ENCODE measurements at regions of chr1 and their contacts with region 1.

Region 1: GRCh38 chr1:68111519-68112436 is 61.4 kb upstream of the DIRAS3 start:
- DNase-seq: peak; percentile 58
- H3K4me3 ChIP-seq: no peak overlapping the region
- H3K27ac ChIP-seq: no peak overlapping the region
- H3K4me1 ChIP-seq: peaks cover 5% of the 10 kb centered on the region
- H3K27me3 ChIP-seq: no peaks in the 10 kb centered on the region
- CTCF ChIP-seq: peak; percentile 44

Region 2: DNA sequence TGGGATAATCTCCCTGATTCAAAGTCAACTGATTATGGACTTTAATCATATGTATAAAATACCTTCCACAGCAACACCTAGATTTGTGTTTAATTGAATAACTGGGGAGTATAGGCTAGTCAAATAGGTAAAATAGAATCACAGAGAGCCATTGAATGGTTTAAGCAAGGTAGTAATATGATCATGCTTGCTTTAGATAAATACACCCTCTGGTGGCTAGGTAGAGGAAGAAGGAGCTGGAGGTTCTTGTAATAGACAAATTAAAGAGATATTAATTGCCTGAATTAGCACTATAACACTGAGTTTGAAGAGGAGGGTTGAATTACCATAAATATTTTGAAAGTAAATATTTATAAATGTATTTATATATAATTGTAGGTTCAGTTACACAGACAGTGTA is 101.7 kb before region 1 on chr1:
- intact Hi-C with region 1: no loop called
- DNase-seq: no peak
- H3K4me3 ChIP-seq: no peak overlapping the region
- H3K27ac ChIP-seq: no peak overlapping the region
- H3K4me1 ChIP-seq: no peaks in the 10 kb centered on the region
- H3K27me3 ChIP-seq: no peaks in the 10 kb centered on the region
- CTCF ChIP-seq: no peak

Region 3: GRCh38 chr1:68057564-68057963 is 54.2 kb before region 1 on chr1:
- intact Hi-C with region 1: loop called (anchors 5 kb)
- DNase-seq: no peak
- H3K4me3 ChIP-seq: no peak overlapping the region
- H3K27ac ChIP-seq: no peak overlapping the region
- H3K4me1 ChIP-seq: no peaks in the 10 kb centered on the region
- H3K27me3 ChIP-seq: no peaks in the 10 kb centered on the region
- CTCF ChIP-seq: no peak

Region 4: DNA sequence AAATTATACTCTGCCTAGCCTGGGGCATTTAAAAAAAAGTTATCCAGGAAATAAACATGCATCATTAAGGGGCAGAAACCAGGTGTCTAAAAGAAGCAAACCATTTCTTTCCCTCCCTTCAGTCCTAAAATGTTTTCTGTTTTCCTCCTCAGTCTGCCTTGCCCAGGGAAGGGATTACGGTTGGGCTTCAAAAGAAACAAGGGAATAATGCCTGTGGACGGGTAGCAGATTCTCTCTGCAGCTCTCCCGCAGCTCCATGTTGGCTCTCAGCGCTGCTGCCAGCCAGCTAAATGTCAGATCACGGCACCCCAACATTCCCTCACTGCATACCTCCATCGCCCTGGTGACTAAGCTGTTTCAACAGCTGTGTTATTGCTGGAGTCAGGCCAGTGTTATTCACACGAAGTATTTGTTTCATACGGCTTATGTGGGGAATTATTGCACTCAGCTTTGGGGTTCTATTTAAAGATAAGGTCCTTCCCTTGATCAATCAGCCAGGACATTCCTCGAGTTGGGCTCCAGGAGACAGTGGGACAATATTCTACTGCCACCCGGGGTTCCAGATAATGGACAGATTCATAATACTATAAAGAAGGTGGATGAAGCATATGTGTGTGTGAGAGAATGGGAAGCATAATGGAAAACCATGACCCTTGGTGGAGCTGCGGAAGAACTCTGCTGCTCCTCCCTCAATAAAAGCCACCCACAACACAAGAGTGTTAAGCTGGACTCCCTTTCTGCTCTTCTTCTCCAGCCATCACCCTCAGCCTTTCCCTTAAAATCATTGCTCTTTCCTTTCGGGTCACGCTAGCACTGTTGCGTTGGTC is 62.3 kb after region 1 on chr1:
- intact Hi-C with region 1: no loop called
- DNase-seq: peak; percentile 69
- H3K4me3 ChIP-seq: no peak overlapping the region
- H3K27ac ChIP-seq: peak overlapping the region; percentile 64
- H3K4me1 ChIP-seq: peaks cover 15% of the 10 kb centered on the region
- H3K27me3 ChIP-seq: no peaks in the 10 kb centered on the region
- CTCF ChIP-seq: no peak

Measured in colonic mucosa (tissue), 4 donors.